Caco-2 (cell line): ENCODE measurements at regions of chr12 and their contacts with region 1.

Region 1: DNA sequence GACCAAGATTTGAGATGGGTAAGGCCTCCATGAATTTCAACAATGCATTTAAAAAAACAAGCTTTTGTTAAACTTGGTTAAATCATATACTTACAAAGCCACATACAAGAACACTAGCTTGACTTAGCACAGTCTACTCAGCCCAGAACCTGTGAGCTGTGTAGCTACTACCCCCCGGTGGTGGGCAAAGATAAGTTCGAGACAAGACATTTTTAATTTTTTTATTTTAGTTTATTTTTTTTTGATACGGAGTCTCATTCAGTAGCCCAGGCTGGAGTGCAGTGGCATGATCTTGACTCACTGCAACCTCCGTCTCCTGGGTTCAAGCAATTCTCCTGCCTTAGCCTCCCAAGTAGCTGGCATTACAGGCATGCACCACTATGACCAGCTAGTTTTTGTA is 3.7 kb upstream of the NECAP1 start:
- DNase-seq: peak; percentile 63 to 74
- H3K4me3 ChIP-seq: no peak overlapping the region
- H3K4me3 Mint-ChIP-seq: no peak overlapping the region
- H3K27ac Mint-ChIP-seq: no peak overlapping the region
- H3K4me1 ChIP-seq: 0 out of 2 replicates have a peak, but pooled peaks cover 4% of the 10 kb centered on the region
- H3K4me1 Mint-ChIP-seq: peaks cover 14% of the 10 kb centered on the region
- H3K27me3 ChIP-seq: no peaks in the 10 kb centered on the region
- H3K27me3 Mint-ChIP-seq: no peaks in the 10 kb centered on the region
- CTCF ChIP-seq: peak; percentile 60 to 64

Region 2: GRCh38 chr12:8045952-8046944 is 32.1 kb before region 1 on chr12:
- CTCF ChIA-PET with region 1: interaction called, 38 read pairs
- POLR2A ChIA-PET with region 1: interaction called, 9 read pairs
- intact Hi-C with region 1: loop called (anchors 1 kb)
- DNase-seq: peak; percentile 84 to 88
- H3K4me3 ChIP-seq: no peak overlapping the region
- H3K4me3 Mint-ChIP-seq: no peak overlapping the region
- H3K27ac Mint-ChIP-seq: no peak overlapping the region
- H3K4me1 ChIP-seq: no peaks in the 10 kb centered on the region
- H3K4me1 Mint-ChIP-seq: peaks cover 6% of the 10 kb centered on the region
- H3K27me3 ChIP-seq: no peaks in the 10 kb centered on the region
- H3K27me3 Mint-ChIP-seq: no peaks in the 10 kb centered on the region
- CTCF ChIP-seq: peak; percentile 96 to 98